ENCODE measurements at regions of chr13 and their contacts with region 1.

Region 1: DNA sequence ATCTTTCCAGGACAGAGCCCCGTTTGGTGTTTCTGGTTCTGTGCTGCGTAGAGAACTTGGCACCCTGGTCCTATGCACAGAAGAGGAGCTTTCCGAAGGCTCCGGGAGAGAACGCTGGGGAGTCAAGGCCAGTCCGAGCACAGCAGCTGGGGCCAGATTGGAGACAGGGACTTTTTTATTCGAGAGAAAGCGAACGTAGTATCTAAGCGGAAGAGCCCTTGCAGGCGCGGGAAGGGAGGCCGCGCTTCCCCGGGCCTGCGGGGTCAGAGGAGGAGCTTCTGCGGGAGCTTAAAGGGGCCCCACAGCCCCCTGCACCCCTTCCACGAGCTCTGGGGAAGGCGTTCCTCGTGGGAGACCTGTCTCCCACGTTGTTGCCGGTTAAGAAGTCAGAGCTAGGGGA is 48.6 kb upstream of the ARHGEF7 start:
- DNase-seq: no peak
- H3K4me3 Mint-ChIP-seq: peak overlapping the region; percentile 49
- H3K27ac Mint-ChIP-seq: no peak overlapping the region
- H3K4me1 Mint-ChIP-seq: peaks cover 8% of the 10 kb centered on the region
- H3K27me3 Mint-ChIP-seq: peaks cover 39% of the 10 kb centered on the region

Region 2: GRCh38 chr13:110944121-110944967 is 122.2 kb before region 1 on chr13:
- CTCF ChIA-PET with region 1: interaction called, 11 read pairs
- POLR2A ChIA-PET with region 1: no interaction called
- intact Hi-C with region 1: no loop called
- DNase-seq: peak; percentile 65
- H3K4me3 Mint-ChIP-seq: no peak overlapping the region
- H3K27ac Mint-ChIP-seq: peak overlapping the region; percentile 11
- H3K4me1 Mint-ChIP-seq: peaks cover 32% of the 10 kb centered on the region
- H3K27me3 Mint-ChIP-seq: peaks cover 6% of the 10 kb centered on the region

Region 3: DNA sequence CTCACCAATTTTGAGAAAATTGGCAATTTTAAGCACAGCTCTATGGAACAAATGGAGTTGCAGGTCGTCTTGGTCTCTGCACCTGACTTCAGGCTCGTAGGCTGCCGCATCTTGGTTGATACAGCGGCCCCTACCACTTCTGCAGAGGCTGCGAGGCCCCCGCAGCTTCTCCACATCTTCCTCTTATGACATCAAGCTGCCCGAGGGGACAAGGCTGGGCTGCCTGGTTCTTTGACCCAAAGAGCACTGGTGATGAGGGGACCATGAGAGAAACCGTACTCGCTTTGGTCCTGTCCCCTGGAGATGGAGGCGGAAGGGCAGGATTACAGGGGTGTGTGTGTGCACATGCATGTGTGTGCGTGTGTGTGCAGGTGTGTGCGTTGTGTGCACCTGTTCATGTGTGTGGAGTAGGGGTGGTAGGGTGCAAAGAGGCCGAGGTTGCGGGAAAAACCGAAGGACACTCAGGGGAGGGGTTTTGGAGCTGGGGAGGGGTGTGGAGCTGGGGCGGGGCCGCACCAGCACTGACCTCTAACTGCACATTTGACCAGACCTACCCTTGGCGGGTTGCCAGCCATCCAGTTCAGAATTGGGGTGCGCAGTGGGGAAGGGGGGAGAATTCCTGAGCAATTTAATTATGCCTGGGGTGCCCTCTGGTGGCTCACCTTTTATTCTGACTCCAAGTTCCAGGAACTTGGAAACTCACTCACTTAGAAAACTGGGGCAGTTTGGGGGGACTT is 16.6 kb before region 1 on chr13:
- CTCF ChIA-PET with region 1: interaction called, 16 read pairs
- POLR2A ChIA-PET with region 1: no interaction called
- intact Hi-C with region 1: no loop called
- DNase-seq: no peak
- H3K4me3 Mint-ChIP-seq: no peak overlapping the region
- H3K27ac Mint-ChIP-seq: no peak overlapping the region
- H3K4me1 Mint-ChIP-seq: peaks cover 7% of the 10 kb centered on the region
- H3K27me3 Mint-ChIP-seq: no peaks in the 10 kb centered on the region

Region 4: GRCh38 chr13:111216166-111216960 is 149.8 kb after region 1 on chr13:
- CTCF ChIA-PET with region 1: interaction called, 58 read pairs
- POLR2A ChIA-PET with region 1: interaction called, 3 read pairs
- intact Hi-C with region 1: loop called (anchors 1 kb)
- DNase-seq: peak; percentile 51
- H3K4me3 Mint-ChIP-seq: no peak overlapping the region
- H3K27ac Mint-ChIP-seq: no peak overlapping the region
- H3K4me1 Mint-ChIP-seq: peaks cover 24% of the 10 kb centered on the region
- H3K27me3 Mint-ChIP-seq: no peaks in the 10 kb centered on the region

Region 5: GRCh38 chr13:111384441-111385182 is 318.1 kb after region 1 on chr13:
- CTCF ChIA-PET with region 1: no interaction called
- POLR2A ChIA-PET with region 1: no interaction called
- intact Hi-C with region 1: loop called (anchors 10 kb)
- DNase-seq: peak; percentile 15
- H3K4me3 Mint-ChIP-seq: no peak overlapping the region
- H3K27ac Mint-ChIP-seq: no peak overlapping the region
- H3K4me1 Mint-ChIP-seq: peaks cover 23% of the 10 kb centered on the region
- H3K27me3 Mint-ChIP-seq: peaks cover 16% of the 10 kb centered on the region

Measured in activated CD4-positive, alpha-beta memory T cell treated with anti-CD3 and anti-CD28 coated beads for 36 hours (primary cell).